H1 (cell line): ENCODE measurements at regions of chr1 and their contacts with region 1.

Region 1: GRCh38 chr1:110420874-110421793 is 13.6 kb upstream of the LAMTOR5 start:
- DNase-seq: no peak
- H3K4me3 ChIP-seq: no peak overlapping the region
- H3K27ac ChIP-seq: no peak overlapping the region
- H3K4me1 ChIP-seq: peaks cover 0 to 4% (median 0%) of the 10 kb centered on the region in 4 experiments; a peak in 2 of 7 replicates
- H3K27me3 ChIP-seq: no peaks in the 10 kb centered on the region; a peak in 1 of 7 replicates
- CTCF ChIP-seq: no peak
- EP300 ChIP-seq: no peak
- POLR2A ChIP-seq: no peak
- RAD21 ChIP-seq: no peak

Region 2: DNA sequence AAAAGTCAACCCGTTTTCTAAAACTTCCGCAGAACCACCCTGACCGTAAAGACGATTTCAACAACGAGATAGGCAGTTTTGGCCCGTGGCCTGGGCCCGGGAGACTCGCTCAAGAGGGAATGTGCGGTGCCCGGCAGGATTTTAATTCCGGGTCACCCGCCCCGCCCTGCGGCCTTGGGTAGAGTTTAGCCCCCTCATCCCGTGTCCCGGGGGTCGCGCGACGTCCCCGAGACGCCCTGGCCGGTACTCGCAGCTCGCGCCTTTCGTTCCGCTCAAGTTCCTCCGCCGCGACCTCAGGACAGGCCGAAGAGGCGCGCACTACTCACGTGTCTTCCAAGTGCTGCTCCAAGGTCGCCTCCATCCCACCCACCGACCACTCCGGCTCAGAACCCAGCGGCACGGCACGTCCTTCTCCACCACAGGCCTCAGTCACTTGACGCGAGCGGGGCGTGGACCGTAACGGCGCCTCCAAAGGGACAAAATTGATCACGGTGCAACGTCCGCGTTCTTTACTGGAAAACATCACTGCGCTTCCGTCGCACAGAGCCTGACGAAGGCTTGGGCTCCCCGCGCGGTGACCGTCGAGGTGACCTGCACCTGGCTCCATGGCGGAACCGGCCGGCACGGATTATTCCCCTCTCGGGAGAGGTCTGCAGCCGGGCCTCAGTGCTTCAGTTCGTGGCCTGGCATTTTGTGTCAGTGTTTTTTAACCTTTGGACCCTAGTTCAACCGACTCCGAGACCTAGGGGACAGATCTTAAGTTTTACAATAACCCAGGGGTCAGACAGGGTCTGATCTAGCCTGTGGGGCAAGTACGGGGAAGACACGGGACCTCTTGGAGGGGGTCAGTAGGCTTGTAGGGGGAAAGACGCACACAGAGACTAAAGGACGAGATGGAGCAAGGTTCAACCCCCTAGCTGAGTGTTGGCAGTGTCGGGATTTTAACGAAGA is 13.6 kb before region 1 on chr1 and contains the start of gene LAMTOR5:
- CTCF ChIA-PET with region 1: interaction called, 65 read pairs
- POLR2A ChIA-PET with region 1: interaction called, 5 read pairs
- DNase-seq: peak; percentile 67 to 91
- H3K4me3 ChIP-seq: peak within 1 kb of the TSS; percentile 78 to 90 (median 83)
- H3K27ac ChIP-seq: peak within 1 kb of the TSS; percentile 76
- H3K4me1 ChIP-seq: no peaks in the 10 kb centered on the region; a peak in 2 of 7 replicates
- H3K27me3 ChIP-seq: 0 out of 7 replicates have a peak, but pooled peaks cover 0 to 3% (median 0%) of the 10 kb centered on the region in 4 experiments
- CTCF ChIP-seq: no peak
- EP300 ChIP-seq: no peak
- POLR2A ChIP-seq: peak; percentile 68 to 91
- RAD21 ChIP-seq: 0 out of 4 replicates have a peak, but pooled peaks of 1 of the 2 experiments have one; percentile 0
- total RNA-seq, gene LAMTOR5: 84.4 and 91.9 TPM in 2 replicates